Caco-2 (cell line): ENCODE measurements at regions of chr1 and their contacts with region 1.

Region 1: DNA sequence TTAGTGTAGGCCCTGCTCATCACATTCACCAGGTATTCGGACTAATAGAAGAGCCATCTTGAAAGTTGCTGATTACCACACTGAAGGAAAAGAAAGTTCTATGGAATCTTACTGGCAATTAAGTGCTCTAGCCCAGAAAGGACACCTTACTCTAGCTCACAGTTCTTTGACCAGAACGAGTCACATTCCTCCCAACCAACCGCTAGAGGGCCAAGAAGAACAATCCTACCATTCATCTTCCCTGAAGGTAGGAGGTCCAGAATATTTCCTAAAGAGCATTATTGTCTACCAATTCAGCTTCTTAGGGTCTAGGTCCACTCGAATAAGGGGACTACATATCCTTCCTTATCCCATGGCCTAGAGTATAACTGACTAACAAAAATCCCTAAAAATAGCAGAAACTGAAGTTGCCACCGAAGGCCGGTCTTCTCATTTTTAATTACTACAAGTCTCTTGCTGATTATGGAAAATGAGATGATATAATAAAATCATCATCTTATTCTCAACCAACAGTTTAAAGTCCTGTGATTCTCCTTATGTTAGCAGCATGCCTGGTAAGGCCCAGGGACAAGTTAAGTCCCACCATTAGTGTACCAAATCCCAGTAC is 2.7 kb upstream of the FMO1 start:
- DNase-seq: peak; percentile 41 to 61
- H3K4me3 ChIP-seq: no peak overlapping the region
- H3K4me3 Mint-ChIP-seq: no peak overlapping the region
- H3K27ac Mint-ChIP-seq: no peak overlapping the region
- H3K4me1 ChIP-seq: no peaks in the 10 kb centered on the region
- H3K4me1 Mint-ChIP-seq: no peaks in the 10 kb centered on the region
- H3K27me3 ChIP-seq: no peaks in the 10 kb centered on the region
- H3K27me3 Mint-ChIP-seq: no peaks in the 10 kb centered on the region
- CTCF ChIP-seq: peak; percentile 84 to 86

Region 2: GRCh38 chr1:170749549-170749948 is 496.0 kb before region 1 on chr1:
- CTCF ChIA-PET with region 1: no interaction called
- POLR2A ChIA-PET with region 1: no interaction called
- intact Hi-C with region 1: no loop called
- DNase-seq: no peak
- H3K4me3 ChIP-seq: no peak overlapping the region
- H3K4me3 Mint-ChIP-seq: no peak overlapping the region
- H3K27ac Mint-ChIP-seq: no peak overlapping the region
- H3K4me1 ChIP-seq: no peaks in the 10 kb centered on the region
- H3K4me1 Mint-ChIP-seq: no peaks in the 10 kb centered on the region
- H3K27me3 ChIP-seq: no peaks in the 10 kb centered on the region
- H3K27me3 Mint-ChIP-seq: peaks cover 2% of the 10 kb centered on the region
- CTCF ChIP-seq: no peak

Region 3: GRCh38 chr1:171267391-171267790 is 21.8 kb after region 1 on chr1:
- CTCF ChIA-PET with region 1: no interaction called
- POLR2A ChIA-PET with region 1: no interaction called
- intact Hi-C with region 1: no loop called
- DNase-seq: no peak
- H3K4me3 ChIP-seq: no peak overlapping the region
- H3K4me3 Mint-ChIP-seq: no peak overlapping the region
- H3K27ac Mint-ChIP-seq: peak overlapping the region; percentile 0
- H3K4me1 ChIP-seq: no peaks in the 10 kb centered on the region
- H3K4me1 Mint-ChIP-seq: no peaks in the 10 kb centered on the region
- H3K27me3 ChIP-seq: no peaks in the 10 kb centered on the region
- H3K27me3 Mint-ChIP-seq: no peaks in the 10 kb centered on the region
- CTCF ChIP-seq: no peak

Region 4: GRCh38 chr1:171405391-171405714 is 159.8 kb after region 1 on chr1:
- CTCF ChIA-PET with region 1: no interaction called
- POLR2A ChIA-PET with region 1: no interaction called
- intact Hi-C with region 1: loop called (anchors 1 kb)
- DNase-seq: no peak
- H3K4me3 ChIP-seq: no peak overlapping the region
- H3K4me3 Mint-ChIP-seq: no peak overlapping the region
- H3K27ac Mint-ChIP-seq: no peak overlapping the region
- H3K4me1 ChIP-seq: peaks cover 9% of the 10 kb centered on the region
- H3K4me1 Mint-ChIP-seq: peaks cover 16% of the 10 kb centered on the region
- H3K27me3 ChIP-seq: no peaks in the 10 kb centered on the region
- H3K27me3 Mint-ChIP-seq: no peaks in the 10 kb centered on the region
- CTCF ChIP-seq: peak in 1 of 2 experiments; percentile 6

Region 5: DNA sequence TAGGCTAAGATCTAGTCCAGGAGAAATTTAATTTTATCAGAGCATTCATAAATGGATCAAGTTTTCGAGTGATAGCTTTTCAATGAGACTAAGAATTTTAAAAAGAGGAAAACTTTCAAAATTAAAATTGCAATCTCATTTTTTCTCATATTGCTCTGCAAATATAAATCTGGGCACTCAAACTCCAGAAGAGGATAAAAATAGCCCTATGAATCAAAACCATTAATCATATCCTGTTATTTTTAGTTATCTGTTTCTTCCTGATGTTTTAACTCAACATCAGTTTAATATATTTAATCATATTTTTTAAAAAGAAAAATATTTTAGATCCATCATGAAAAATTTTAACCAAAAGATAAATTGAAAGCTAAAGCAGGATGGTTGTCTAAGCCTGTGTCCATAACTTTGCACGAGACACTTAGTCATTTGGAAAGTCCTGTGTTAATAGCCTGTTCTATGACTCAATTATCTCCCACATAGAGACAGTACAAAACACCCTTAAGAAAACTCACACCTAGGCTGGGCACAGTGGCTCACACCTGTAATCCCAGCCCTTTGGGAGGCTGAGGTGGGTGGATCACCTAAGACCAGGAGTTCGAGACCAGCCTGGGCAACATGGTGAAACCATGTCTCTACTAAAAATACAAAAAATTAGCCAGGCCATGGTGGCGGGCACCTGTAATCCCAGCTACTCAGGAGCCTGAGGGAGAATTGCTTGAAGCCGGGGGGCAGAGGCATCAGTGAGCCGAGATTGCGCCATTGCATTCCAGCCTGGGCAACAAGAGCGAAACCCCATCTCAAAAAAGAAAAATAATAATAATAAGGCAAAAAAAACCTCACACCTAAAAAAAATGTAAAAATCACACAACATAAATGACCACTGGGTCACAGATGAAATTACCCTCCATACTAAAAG is 222.8 kb after region 1 on chr1:
- CTCF ChIA-PET with region 1: no interaction called
- POLR2A ChIA-PET with region 1: no interaction called
- intact Hi-C with region 1: no loop called
- DNase-seq: no peak
- H3K4me3 ChIP-seq: no peak overlapping the region
- H3K4me3 Mint-ChIP-seq: no peak overlapping the region
- H3K27ac Mint-ChIP-seq: no peak overlapping the region
- H3K4me1 ChIP-seq: no peaks in the 10 kb centered on the region
- H3K4me1 Mint-ChIP-seq: no peaks in the 10 kb centered on the region
- H3K27me3 ChIP-seq: no peaks in the 10 kb centered on the region
- H3K27me3 Mint-ChIP-seq: no peaks in the 10 kb centered on the region
- CTCF ChIP-seq: no peak

Region 6: DNA sequence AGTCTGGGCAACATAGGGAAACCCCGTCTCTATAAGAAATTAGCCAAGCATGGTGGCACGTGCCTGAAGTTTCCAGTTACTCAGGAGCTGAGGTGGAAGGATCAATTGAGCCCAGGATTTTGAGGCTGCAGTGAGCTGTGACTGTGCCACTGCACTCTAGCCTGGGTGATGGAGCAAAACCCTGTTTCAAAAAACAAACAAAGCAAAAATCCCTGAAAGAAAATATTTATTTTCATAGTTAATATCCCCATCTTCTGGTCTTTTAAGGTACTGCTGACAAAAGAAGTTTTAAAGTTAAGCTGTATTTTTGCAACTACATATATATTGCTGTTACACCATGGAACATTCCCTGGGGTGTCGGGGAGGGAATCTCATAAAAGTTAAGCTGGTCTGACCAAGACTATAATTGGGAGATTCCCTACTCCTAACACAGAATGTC is 470.3 kb after region 1 on chr1:
- CTCF ChIA-PET with region 1: no interaction called
- POLR2A ChIA-PET with region 1: no interaction called
- intact Hi-C with region 1: loop called (anchors 10 kb)
- DNase-seq: peak in 1 of 2 experiments; percentile 8
- H3K4me3 ChIP-seq: no peak overlapping the region
- H3K4me3 Mint-ChIP-seq: no peak overlapping the region
- H3K27ac Mint-ChIP-seq: no peak overlapping the region
- H3K4me1 ChIP-seq: no peaks in the 10 kb centered on the region
- H3K4me1 Mint-ChIP-seq: no peaks in the 10 kb centered on the region
- H3K27me3 ChIP-seq: no peaks in the 10 kb centered on the region
- H3K27me3 Mint-ChIP-seq: no peaks in the 10 kb centered on the region
- CTCF ChIP-seq: peak; percentile 13 to 53